ENCODE measurements at regions of chr7 and their contacts with region 1.

Region 1: DNA sequence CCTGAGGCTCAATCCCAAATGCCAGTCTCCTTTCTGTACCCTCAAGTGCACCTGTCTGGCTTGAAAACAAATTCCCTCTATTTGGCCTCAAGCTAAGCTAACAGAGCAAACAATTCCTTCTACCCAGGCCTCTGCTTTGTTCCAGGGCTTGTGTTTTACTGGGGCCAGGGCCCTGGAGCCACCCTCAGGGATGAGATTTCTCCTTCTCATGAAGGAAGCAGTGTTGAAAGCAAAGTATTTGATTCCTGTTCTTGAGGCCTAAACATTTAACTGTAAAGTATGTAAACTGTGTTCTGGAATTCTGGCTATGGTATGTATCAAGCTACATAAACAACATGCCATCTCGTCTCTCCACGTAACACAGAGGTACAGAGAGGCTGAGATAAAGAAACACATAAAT is 81.8 kb downstream of the HERPUD2 start:
- H3K4me3 ChIP-seq: no peak overlapping the region
- H3K27ac ChIP-seq: no peak overlapping the region
- H3K4me1 ChIP-seq: no peaks in the 10 kb centered on the region
- CTCF ChIP-seq: no peak

Region 2: DNA sequence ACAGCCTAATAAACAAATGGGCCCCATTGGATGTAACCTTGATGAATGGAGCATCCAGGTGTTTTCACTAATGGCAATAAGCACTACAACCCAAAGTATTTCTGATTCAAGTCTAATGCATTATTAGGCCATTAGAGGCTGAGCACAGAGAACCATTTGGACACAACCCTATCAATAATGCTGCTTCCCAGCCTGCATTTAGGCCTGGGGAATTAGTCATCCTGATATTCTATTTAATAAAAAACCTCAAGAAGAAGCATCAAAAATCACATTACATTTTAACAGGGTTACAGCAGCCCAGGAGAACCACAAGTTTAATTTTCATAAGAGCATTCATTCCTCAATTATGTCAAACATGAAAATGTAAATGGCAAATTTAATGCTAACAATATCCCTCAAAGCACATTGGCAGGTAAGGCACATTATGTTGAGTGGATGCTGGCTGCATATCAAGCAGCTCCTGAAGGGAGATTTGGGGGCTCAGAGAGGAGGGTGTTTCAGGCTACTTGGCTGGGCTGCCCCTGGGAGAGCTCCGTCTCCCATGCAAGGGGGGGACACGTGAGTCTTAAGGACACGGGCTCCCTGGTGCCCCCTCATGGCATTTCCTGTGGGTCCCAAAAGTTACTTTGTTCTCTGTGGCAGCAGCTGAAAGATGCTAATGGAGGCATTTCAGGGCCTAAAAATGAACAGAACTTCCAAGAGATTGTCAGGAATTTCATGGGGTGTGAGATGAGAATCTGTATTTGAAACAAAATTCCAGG is 61.6 kb before region 1 on chr7:
- CTCF ChIA-PET with region 1: no interaction called
- POLR2A ChIA-PET with region 1: no interaction called
- H3K4me3 ChIP-seq: no peak overlapping the region
- H3K27ac ChIP-seq: no peak overlapping the region
- H3K4me1 ChIP-seq: no peaks in the 10 kb centered on the region
- CTCF ChIP-seq: no peak

Region 3: GRCh38 chr7:35624299-35625186 is 11.4 kb after region 1 on chr7:
- CTCF ChIA-PET with region 1: interaction called, 17 read pairs
- POLR2A ChIA-PET with region 1: no interaction called
- H3K4me3 ChIP-seq: no peak overlapping the region
- H3K27ac ChIP-seq: no peak overlapping the region
- H3K4me1 ChIP-seq: 0 out of 2 replicates have a peak, but pooled peaks cover 7% of the 10 kb centered on the region
- CTCF ChIP-seq: peak; percentile 59

Measured in HEK293 (cell line).